HCT116 (cell line): ENCODE measurements at regions of chr4 and their contacts with region 1.

Region 1: GRCh38 chr4:52288212-52288855 is 237.2 kb downstream of the SPATA18 start:
- DNase-seq: no peak
- ATAC-seq: no peak
- H3K4me3 ChIP-seq: no peak overlapping the region
- H3K27ac ChIP-seq: no peak overlapping the region
- H3K4me1 ChIP-seq: no peaks in the 10 kb centered on the region
- H3K27me3 ChIP-seq: peaks cover 29% of the 10 kb centered on the region; the same call in 1 of the 2 replicates
- CTCF ChIP-seq: no peak
- POLR2A ChIP-seq: no peak
- RAD21 ChIP-seq: no peak

Region 2: DNA sequence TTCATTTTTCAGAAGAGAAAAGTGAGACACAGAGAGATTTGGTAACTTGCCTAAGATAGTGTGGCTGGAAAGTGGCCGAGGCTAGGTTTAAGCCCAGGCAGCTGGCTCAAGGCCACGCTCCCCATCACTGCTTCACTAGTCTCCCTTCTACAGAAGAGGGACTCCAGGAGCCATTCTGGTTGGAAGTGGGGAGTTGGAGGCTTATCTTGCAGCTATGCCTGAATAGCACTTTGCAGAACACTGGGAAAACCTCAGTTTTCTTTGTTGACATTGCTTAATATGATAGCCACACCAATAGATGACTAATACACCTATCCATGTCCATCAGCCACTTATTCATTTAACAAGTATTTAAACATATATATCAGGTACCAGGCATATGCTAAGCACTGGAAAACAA is 286.7 kb before region 1 on chr4:
- CTCF ChIA-PET with region 1: no interaction called
- POLR2A ChIA-PET with region 1: no interaction called
- RAD21 ChIA-PET with region 1: no interaction called
- intact Hi-C with region 1: no loop called
- DNase-seq: no peak
- ATAC-seq: no peak
- H3K4me3 ChIP-seq: no peak overlapping the region
- H3K27ac ChIP-seq: no peak overlapping the region
- H3K4me1 ChIP-seq: no peaks in the 10 kb centered on the region
- H3K27me3 ChIP-seq: no peaks in the 10 kb centered on the region
- CTCF ChIP-seq: no peak
- POLR2A ChIP-seq: no peak
- RAD21 ChIP-seq: no peak

Region 3: GRCh38 chr4:52116641-52117040 is 171.7 kb before region 1 on chr4:
- CTCF ChIA-PET with region 1: no interaction called
- POLR2A ChIA-PET with region 1: no interaction called
- RAD21 ChIA-PET with region 1: no interaction called
- intact Hi-C with region 1: no loop called
- DNase-seq: no peak
- ATAC-seq: no peak
- H3K4me3 ChIP-seq: no peak overlapping the region
- H3K27ac ChIP-seq: no peak overlapping the region
- H3K4me1 ChIP-seq: no peaks in the 10 kb centered on the region
- H3K27me3 ChIP-seq: no peaks in the 10 kb centered on the region
- CTCF ChIP-seq: no peak
- POLR2A ChIP-seq: no peak
- RAD21 ChIP-seq: no peak

Region 4: DNA sequence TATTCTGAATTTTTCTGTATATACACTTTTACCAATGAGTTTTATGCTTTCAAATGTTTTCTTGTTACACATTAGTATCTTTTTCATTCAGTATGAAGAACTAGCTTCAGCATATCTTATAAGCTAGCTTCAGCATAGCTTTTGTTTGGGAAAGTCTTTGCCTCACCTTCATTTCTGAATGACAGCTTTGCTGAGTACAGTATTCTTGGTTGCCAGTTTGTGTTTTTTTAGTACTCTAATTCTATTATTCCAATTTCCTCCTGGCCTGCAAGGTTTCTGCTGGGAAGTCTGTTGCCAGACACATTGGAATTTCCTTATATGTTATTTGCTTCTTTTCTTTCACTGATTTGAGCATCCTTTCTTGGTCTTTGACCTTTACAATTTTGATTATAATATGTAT is 41.6 kb after region 1 on chr4:
- CTCF ChIA-PET with region 1: no interaction called
- POLR2A ChIA-PET with region 1: no interaction called
- RAD21 ChIA-PET with region 1: no interaction called
- intact Hi-C with region 1: loop called (anchors 10 kb)
- DNase-seq: no peak
- ATAC-seq: no peak
- H3K4me3 ChIP-seq: no peak overlapping the region
- H3K27ac ChIP-seq: no peak overlapping the region
- H3K4me1 ChIP-seq: no peaks in the 10 kb centered on the region
- H3K27me3 ChIP-seq: peaks cover 2% of the 10 kb centered on the region; the same call in 1 of the 2 replicates
- CTCF ChIP-seq: no peak
- POLR2A ChIP-seq: no peak
- RAD21 ChIP-seq: no peak

Region 5: DNA sequence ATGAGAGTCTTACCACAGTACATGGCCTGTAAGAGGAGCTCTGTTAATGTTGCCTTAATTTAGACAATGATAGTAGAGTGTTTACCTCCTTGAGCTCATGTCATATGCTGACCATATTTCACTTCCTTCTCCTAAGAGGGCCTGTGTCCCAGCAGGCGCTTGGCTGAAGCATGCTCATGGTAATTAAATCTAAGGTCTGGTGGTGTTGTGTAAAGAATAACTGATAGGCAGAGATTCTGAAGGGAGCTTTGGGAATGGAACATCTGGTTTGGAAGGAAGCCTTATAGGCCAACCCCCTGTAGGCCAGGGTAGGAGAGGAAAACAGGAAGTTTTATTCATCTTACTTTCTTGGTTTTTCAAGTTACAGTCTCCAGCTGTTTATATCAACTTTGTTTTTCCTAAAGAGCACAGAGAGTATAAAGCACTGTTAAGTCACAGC is 70.6 kb after region 1 on chr4:
- CTCF ChIA-PET with region 1: no interaction called
- POLR2A ChIA-PET with region 1: no interaction called
- RAD21 ChIA-PET with region 1: no interaction called
- intact Hi-C with region 1: no loop called
- DNase-seq: no peak
- ATAC-seq: no peak
- H3K4me3 ChIP-seq: no peak overlapping the region
- H3K27ac ChIP-seq: no peak overlapping the region
- H3K4me1 ChIP-seq: no peaks in the 10 kb centered on the region
- H3K27me3 ChIP-seq: no peaks in the 10 kb centered on the region
- CTCF ChIP-seq: no peak
- POLR2A ChIP-seq: no peak
- RAD21 ChIP-seq: no peak